Adrenal gland (tissue), 19 donors: ENCODE measurements at regions of chr4 and their contacts with region 1.

Region 1: DNA sequence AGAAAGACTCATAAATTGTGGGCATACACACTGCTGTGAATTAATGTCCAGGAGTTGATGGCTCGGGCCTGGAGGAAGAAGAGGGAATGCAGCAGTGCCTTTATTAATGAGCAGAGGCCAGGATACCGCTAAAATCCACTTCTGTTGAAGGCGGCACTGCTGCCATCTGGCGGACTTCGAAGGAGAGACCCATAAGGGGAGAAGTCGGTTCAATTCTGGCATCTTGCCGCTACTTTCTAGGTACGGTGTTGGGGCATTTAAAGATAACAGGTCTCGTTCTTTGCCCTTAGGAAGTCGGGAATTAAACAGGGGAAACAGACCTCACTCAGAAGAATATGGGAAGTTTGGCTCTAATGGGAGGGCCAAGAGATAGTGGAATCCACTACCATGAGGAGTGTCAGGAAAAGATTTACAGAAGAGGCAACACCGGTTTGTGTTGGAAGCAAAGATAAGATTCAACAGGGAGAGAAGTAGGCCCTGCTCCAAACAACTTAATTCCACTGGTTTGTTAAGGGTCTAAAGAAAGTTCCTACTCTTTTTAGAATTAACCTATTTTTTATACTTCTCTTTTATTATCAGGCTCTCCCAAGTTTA is 133.6 kb upstream of the GIMD1 start:
- DNase-seq: peak; percentile 54 to 83 (median 73)
- H3K4me3 ChIP-seq: no peak overlapping the region
- H3K27ac ChIP-seq: no peak overlapping the region
- H3K4me1 ChIP-seq: no peaks in the 10 kb centered on the region
- H3K27me3 ChIP-seq: no peaks in the 10 kb centered on the region
- CTCF ChIP-seq: peak; percentile 32 to 64 (median 59)
- POLR2A ChIP-seq: no peak

Region 2: GRCh38 chr4:106253364-106254129 is 248.7 kb before region 1 on chr4:
- intact Hi-C with region 1: no loop called
- DNase-seq: no peak
- H3K4me3 ChIP-seq: no peak overlapping the region
- H3K27ac ChIP-seq: no peak overlapping the region
- H3K4me1 ChIP-seq: no peaks in the 10 kb centered on the region
- H3K27me3 ChIP-seq: no peaks in the 10 kb centered on the region
- CTCF ChIP-seq: no peak
- POLR2A ChIP-seq: no peak

Region 3: GRCh38 chr4:106266201-106266600 is 236.0 kb before region 1 on chr4:
- intact Hi-C with region 1: loop called in 1 of 2 experiments (anchors 10 kb)
- DNase-seq: peak in 1 of 7 donors; percentile 10
- H3K4me3 ChIP-seq: no peak overlapping the region
- H3K27ac ChIP-seq: no peak overlapping the region
- H3K4me1 ChIP-seq: peaks cover 0 to 28% of the 10 kb centered on the region in 2 donors
- H3K27me3 ChIP-seq: no peaks in the 10 kb centered on the region
- CTCF ChIP-seq: peak; percentile 29 to 67 (median 58)
- POLR2A ChIP-seq: no peak

Region 4: DNA sequence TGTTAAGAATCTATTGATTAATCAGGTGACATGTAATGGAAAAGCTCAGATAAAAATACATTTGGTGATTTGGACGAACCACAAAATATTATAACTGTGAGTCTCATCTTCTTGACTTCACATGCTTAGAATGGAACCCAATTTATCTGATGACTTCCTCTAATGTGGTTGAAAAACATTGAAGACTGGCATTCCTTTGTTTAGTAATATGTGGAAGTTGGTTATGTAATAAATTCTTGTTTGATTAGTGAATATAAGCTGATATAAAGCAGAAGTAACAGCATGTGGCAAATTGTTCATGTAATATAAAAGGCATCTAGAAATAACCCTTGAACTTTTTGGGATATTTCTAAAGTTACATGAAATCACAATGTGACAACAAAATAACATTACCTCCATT is 143.3 kb before region 1 on chr4:
- intact Hi-C with region 1: no loop called
- DNase-seq: no peak
- H3K4me3 ChIP-seq: no peak overlapping the region
- H3K27ac ChIP-seq: no peak overlapping the region
- H3K4me1 ChIP-seq: no peaks in the 10 kb centered on the region
- H3K27me3 ChIP-seq: no peaks in the 10 kb centered on the region
- CTCF ChIP-seq: no peak
- POLR2A ChIP-seq: no peak

Region 5: DNA sequence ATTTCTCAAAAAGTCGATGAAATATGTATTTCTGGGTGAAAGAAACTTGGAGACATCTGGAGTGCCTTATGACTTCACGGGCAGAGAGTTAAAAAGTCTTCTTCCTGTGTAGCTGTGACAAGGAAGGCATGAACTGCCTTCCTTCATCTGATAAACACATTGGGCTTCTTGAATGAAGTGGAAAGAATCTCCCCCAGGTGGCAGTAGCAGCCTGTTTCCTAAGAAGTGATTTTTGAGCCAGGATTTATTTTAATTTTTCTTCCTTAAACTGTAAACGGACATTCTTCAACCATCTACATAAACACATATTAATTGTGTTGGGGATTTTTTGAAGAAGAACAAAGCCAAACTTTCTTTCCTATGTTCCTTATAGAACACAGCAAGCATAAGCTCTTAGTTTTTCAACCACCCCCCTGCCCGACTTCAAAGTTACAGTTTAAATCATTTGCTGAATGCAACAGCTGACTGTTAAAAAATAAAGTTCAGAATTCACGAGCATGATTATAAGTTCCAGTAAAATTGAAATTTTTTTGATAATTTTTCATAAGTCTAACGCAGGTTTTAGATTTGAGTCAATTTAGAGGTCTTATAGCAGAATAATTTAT is 132.6 kb before region 1 on chr4:
- intact Hi-C with region 1: loop called in 1 of 2 experiments (anchors 10 kb)
- DNase-seq: peak; percentile 15 to 54 (median 34)
- H3K4me3 ChIP-seq: no peak overlapping the region
- H3K27ac ChIP-seq: no peak overlapping the region
- H3K4me1 ChIP-seq: peaks cover 0 to 5% of the 10 kb centered on the region in 2 donors
- H3K27me3 ChIP-seq: peaks cover 9% of the 10 kb centered on the region
- CTCF ChIP-seq: peak; percentile 31 to 60 (median 52)
- POLR2A ChIP-seq: no peak